Left cardiac atrium (tissue), 4 donors: ENCODE measurements at regions of chr15 and their contacts with region 1.

Region 1: DNA sequence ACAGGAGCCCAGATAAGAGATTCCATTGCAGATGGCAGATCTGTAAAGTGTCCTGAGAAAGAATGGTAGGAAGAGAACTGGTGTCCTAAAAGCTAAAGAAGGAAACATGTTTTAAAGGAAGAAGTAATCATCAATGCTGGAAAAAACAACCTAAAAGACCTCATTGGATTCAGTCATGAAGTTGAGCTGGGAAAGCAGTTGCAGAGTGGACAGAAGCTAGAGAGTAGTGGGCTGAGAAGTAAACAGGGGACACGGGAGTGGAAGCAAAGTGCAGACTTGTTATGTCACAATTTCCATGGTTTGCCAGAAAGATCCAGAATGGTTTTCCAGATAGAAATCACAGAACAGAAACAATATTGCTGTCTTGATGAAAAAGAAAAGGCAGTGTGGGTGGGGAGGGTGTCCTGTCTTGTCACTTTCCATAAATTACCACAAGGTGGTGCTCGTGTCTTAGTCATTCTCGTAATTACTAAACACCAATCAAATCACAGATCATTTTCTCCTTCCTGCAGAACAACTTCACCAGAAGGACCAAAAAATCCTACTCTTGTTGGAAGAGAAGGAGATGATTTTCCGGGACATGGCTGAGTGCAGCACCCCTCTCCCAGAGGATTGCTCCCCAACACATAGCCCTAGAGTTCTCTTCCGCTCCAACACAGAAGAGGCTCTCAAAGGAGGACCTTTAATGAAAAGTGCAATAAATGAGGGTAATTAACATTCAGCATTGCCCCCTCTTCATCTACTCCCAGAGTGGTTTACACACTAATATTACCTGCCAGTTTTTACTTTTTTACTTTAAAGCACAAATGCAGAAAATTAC is 64.5 kb downstream of the KLHL25 start:
- DNase-seq: no peak
- ATAC-seq: peak; percentile 61 to 74

Region 2: GRCh38 chr15:85485956-85486567 is 244.1 kb before region 1 on chr15:
- intact Hi-C with region 1: loop called in 1 of 2 experiments (anchors 10 kb)
- DNase-seq: no peak
- ATAC-seq: peak; percentile 73 to 83